ENCODE measurements at regions of chr3 and their contacts with region 1.

Region 1: GRCh38 chr3:172106989-172107388 is 67.6 kb downstream of the FNDC3B start:
- DNase-seq: peak; percentile 74
- H3K4me3 Mint-ChIP-seq: peak overlapping the region; percentile 59
- H3K27ac Mint-ChIP-seq: peak overlapping the region; percentile 89
- H3K4me1 Mint-ChIP-seq: peaks cover 72% of the 10 kb centered on the region
- H3K27me3 Mint-ChIP-seq: no peaks in the 10 kb centered on the region

Region 2: DNA sequence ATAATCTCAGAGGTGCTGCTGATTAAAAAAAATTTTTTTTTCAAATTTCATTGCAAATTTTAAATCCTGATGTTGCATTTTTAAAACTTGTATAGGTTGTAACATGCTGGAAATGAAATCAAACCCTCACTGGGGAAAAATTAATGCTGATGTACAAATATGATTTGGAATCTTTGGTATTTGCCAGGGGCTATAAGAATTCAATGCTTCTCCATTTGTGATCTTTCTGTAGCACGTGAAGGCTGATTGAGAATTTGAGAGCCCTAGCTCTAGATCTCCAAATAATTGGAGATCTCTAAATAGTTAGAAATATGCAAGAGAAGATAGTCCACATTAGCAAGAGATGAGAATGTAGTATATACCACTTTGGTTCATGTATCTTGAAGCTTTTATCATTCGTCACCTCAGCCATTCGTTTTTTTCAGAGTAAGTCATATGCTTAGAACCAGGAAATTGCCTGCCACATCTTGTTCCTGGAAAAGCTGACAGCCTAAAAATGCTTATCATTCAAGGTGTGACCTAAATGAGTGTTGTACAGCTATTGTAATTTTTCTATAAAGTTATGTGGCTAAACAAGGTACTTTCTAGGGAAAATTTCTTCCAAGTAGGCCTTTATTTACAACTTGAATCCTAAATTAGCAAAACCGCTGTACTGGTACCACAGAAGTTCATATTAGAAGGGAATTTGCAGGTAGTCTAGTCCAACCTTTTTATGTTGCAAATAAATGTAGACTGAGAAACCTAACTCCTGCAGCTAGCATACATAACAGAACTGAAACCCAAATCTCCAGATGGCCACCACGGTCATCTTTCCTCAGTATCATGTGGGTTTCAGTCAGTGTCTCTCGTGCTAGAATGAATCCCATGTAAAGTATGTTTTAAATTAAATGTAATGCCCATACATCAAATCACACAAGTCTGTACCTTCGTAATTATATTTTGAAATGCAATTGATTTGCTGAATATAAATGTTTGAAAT is 19.1 kb before region 1 on chr3:
- CTCF ChIA-PET with region 1: interaction called, 8 read pairs
- POLR2A ChIA-PET with region 1: interaction called, 9 read pairs
- intact Hi-C with region 1: loop called (anchors 1 kb)
- DNase-seq: peak; percentile 35
- H3K4me3 Mint-ChIP-seq: no peak overlapping the region
- H3K27ac Mint-ChIP-seq: peak overlapping the region; percentile 55
- H3K4me1 Mint-ChIP-seq: peaks cover 47% of the 10 kb centered on the region
- H3K27me3 Mint-ChIP-seq: no peaks in the 10 kb centered on the region

Region 3: GRCh38 chr3:172129870-172130683 is 23.1 kb after region 1 on chr3:
- CTCF ChIA-PET with region 1: interaction called, 9 read pairs
- POLR2A ChIA-PET with region 1: interaction called, 6 read pairs
- intact Hi-C with region 1: loop called (anchors 1 kb)
- DNase-seq: peak; percentile 81
- H3K4me3 Mint-ChIP-seq: peak overlapping the region; percentile 17
- H3K27ac Mint-ChIP-seq: peak overlapping the region; percentile 64
- H3K4me1 Mint-ChIP-seq: peaks cover 53% of the 10 kb centered on the region
- H3K27me3 Mint-ChIP-seq: no peaks in the 10 kb centered on the region

Region 4: DNA sequence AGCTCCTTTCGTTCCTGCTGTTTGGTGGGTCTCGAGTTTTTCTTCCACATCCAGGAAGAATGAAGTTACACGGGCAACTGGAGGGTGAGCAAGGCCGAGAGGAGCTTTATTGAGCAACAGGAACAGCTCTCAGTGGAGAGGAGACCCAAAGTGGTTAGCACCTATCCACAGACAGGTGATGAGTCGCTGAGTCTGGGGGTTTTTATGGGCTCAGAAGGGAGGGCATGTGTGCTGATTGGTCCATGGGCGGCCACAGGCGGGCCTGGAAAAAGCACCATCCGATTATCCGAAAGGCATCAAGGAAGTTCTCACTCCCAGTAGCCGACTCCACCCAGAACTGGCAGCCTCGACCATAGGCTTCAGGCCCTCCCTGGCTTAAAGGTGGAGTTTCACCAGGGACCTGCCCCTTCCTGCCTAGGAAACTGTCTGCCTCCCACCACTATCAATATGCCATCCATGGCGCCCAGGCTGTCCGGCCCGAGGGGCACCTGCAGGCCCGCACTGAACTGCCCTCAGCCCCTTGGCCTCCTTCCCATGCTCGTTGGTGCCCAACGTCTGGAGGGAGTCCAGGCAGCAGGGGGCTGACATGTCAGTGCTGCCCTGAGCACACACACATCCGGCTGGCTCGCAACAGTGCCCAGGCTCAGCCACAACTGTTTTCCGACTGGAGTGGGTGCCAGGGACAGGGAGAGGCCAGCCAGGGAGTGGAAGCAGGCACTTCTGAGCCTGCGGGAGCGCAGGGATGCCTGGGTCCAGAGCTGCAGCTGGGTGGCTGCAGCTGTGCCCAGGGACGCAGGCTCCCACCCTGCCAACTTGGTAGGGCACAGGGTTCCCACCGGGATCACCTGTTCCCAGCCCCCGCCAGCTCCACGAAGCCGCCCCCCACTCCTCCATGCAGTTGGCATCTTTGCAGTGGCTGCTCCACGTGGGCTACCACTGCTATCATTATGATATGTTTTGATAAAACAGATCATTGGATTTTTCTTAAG is 102.6 kb after region 1 on chr3:
- CTCF ChIA-PET with region 1: no interaction called
- POLR2A ChIA-PET with region 1: no interaction called
- intact Hi-C with region 1: loop called (anchors 1 kb)
- DNase-seq: no peak
- H3K4me3 Mint-ChIP-seq: no peak overlapping the region
- H3K27ac Mint-ChIP-seq: no peak overlapping the region
- H3K4me1 Mint-ChIP-seq: peaks cover 16% of the 10 kb centered on the region
- H3K27me3 Mint-ChIP-seq: no peaks in the 10 kb centered on the region

Region 5: DNA sequence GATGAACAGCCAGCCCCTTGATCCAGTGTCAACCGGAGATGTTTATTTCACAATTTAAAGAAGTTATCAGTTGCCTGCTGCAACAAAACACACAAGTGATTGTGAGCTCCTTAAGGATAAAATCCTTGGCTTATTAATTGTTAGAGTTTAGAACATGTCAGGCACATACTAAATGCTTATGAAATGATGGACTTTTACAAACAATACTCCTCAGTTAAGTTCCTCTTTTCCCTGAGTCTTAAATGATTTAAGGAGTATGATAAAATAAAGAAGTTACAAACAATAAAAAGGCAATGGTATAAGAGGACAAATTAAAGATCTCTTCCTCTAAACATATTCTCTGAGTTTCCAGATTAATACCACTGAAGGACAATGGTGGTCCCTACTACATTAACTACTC is 335.6 kb after region 1 on chr3:
- CTCF ChIA-PET with region 1: no interaction called
- POLR2A ChIA-PET with region 1: no interaction called
- intact Hi-C with region 1: no loop called
- DNase-seq: no peak
- H3K4me3 Mint-ChIP-seq: no peak overlapping the region
- H3K27ac Mint-ChIP-seq: no peak overlapping the region
- H3K4me1 Mint-ChIP-seq: peaks cover 6% of the 10 kb centered on the region
- H3K27me3 Mint-ChIP-seq: peaks cover 39% of the 10 kb centered on the region

Region 6: GRCh38 chr3:172522871-172523818 is 416.2 kb after region 1 on chr3 and contains the start of gene TNFSF10:
- CTCF ChIA-PET with region 1: no interaction called
- POLR2A ChIA-PET with region 1: no interaction called
- intact Hi-C with region 1: loop called (anchors 2 kb)
- DNase-seq: peak; percentile 84
- H3K4me3 Mint-ChIP-seq: peak within 1 kb of the TSS; percentile 94
- H3K27ac Mint-ChIP-seq: peak within 1 kb of the TSS; percentile 94
- H3K4me1 Mint-ChIP-seq: peaks cover 48% of the 10 kb centered on the region
- H3K27me3 Mint-ChIP-seq: no peaks in the 10 kb centered on the region
- total RNA-seq, gene TNFSF10: 30.1 to 31.8 TPM

Measured in activated CD4-positive, alpha-beta memory T cell treated with anti-CD3 and anti-CD28 coated beads for 36 hours (primary cell).